HAP-1 (cell line): ENCODE measurements at regions of chr11 and their contacts with region 1.

Region 1: GRCh38 chr11:112086422-112087191 is at the starts of genes SDHD and TIMM8B:
- DNase-seq: peak; percentile 90 to 96
- H3K4me3 ChIP-seq: peak within 1 kb of the TSS; percentile 74
- H3K4me1 ChIP-seq: peaks cover 12% of the 10 kb centered on the region
- H3K27me3 ChIP-seq: no peaks in the 10 kb centered on the region

Region 2: GRCh38 chr11:111718436-111718835 is 368.2 kb before region 1 on chr11:
- in situ Hi-C with region 1: no loop called
- DNase-seq: peak; percentile 31 to 49
- H3K4me3 ChIP-seq: no peak overlapping the region; the same call in 1 of the 2 replicates
- H3K4me1 ChIP-seq: peaks cover 16% of the 10 kb centered on the region
- H3K27me3 ChIP-seq: no peaks in the 10 kb centered on the region

Region 3: GRCh38 chr11:111878849-111879636 is 207.6 kb before region 1 on chr11 and contains the starts of genes CFAP68 and FDXACB1:
- in situ Hi-C with region 1: loop called (anchors 10 kb)
- DNase-seq: peak; percentile 96 to 97
- H3K4me3 ChIP-seq: peak within 1 kb of the TSS; percentile 66
- H3K4me1 ChIP-seq: peaks cover 10% of the 10 kb centered on the region
- H3K27me3 ChIP-seq: no peaks in the 10 kb centered on the region

Region 4: DNA sequence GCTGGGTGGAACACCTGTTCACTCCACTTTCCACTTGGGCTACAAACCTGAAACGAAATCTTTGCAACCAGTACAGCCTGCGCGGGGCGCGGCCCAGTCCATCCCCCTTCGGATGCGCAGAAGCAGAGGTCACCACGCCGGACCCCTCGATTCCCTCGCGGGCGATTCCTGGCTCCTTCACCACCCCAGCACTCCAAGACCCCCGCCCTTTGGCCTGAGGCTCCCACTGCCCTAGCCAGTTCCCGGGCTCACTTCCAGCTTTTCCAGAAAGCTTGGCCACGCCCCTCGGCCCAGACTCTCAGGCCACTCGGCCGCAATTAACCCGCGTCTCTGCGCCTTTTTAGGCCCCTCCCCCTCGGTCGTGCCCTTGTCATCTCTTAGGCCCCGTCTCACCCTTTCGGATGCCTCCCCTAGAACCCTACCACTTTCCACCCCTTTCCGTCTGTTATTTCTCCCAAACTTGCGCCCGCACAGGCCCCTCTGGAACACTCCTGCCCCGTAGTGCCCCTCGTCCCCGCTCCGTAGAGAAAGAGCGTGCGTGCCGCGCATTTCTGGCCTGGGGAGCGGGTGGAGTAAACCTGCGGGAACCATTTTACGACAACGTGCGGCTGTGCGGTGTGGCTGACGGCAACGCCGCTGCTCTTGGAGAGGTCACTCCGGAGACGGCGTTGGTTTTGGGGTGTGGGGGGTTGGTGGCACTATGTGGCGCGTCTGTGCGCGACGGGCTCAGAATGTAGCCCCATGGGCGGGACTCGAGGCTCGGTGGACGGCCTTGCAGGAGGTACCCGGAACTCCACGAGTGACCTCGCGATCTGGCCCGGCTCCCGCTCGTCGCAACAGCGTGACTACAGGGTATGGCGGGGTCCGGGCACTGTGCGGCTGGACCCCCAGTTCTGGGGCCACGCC is 61.6 kb before region 1 on chr11 and contains the start of gene DLAT:
- in situ Hi-C with region 1: no loop called
- DNase-seq: peak; percentile 90 to 98
- H3K4me3 ChIP-seq: peak within 1 kb of the TSS; percentile 81
- H3K4me1 ChIP-seq: peaks cover 7% of the 10 kb centered on the region; the same call in 1 of the 2 replicates
- H3K27me3 ChIP-seq: no peaks in the 10 kb centered on the region

Region 5: GRCh38 chr11:113153847-113154246 is 1067.2 kb after region 1 on chr11:
- in situ Hi-C with region 1: no loop called
- DNase-seq: no peak
- H3K4me3 ChIP-seq: no peak overlapping the region
- H3K4me1 ChIP-seq: no peaks in the 10 kb centered on the region
- H3K27me3 ChIP-seq: no peaks in the 10 kb centered on the region